ENCODE measurements at regions of chr20 and their contacts with region 1.

Region 1: GRCh38 chr20:50655311-50655880 is 35.9 kb downstream of the RIPOR3 start:
- DNase-seq: peak; percentile 68 to 85 (median 79)
- ATAC-seq: peak; percentile 68 to 84 (median 78)
- H3K4me3 ChIP-seq: peak overlapping the region in 7 of 12 donors; percentile 6 to 33 (median 14)
- H3K27ac ChIP-seq: peak overlapping the region; percentile 54 to 86 (median 76)
- H3K4me1 ChIP-seq: peaks cover 3 to 52% (median 31%) of the 10 kb centered on the region in 12 donors
- H3K27me3 ChIP-seq: no peaks in the 10 kb centered on the region
- CTCF ChIP-seq: no peak
- POLR2A ChIP-seq: peak in 1 of 2 donors; percentile 17

Region 2: DNA sequence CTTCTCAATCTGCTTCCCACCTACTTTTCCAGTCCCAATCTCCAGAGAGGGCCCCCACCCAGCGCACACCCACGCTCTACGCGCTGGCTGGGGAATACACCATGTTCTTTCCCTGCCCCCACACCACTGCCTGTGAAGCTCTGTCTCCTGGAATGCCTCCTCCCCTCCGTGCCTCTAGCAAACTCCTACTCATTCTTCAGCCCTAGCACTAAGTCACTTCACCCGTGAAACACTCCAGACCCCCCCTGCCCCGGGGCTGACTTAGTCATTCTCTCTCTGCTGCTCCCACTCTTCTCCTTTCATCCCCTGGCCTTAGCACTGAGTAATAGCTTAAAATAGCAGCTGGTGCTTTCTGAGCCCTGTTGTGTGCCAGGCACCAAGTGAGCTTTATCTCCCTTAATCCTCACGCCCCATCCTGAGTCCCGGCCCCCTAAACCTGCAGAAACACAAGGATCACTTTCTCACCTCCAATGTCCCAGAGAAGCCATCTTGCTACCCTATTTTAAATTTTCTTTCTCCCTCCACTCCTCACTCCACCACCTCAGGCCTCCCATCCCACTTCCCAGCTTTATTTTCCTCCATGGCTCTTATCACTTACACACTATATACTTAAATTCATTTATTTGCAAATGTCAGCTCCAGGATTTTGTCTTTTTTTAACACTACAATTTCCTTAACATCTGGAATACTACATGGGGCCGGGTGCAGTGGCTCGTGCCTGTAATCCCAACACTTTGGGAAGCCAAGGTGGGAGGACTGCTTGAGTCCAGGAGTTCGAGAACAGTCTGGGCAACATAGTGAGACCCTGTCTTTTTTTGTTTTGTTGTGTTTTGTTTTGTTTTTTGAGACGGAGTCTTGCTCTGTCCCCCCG is 69.7 kb after region 1 on chr20:
- intact Hi-C with region 1: loop called in 1 of 10 experiments (anchors 5 kb)
- DNase-seq: peak; percentile 62 to 93 (median 75)
- ATAC-seq: peak; percentile 71 to 92 (median 86)
- H3K4me3 ChIP-seq: no peak overlapping the region
- H3K27ac ChIP-seq: peak overlapping the region; percentile 64 to 89 (median 76)
- H3K4me1 ChIP-seq: peaks cover 0 to 36% (median 16%) of the 10 kb centered on the region in 12 donors
- H3K27me3 ChIP-seq: peaks cover 0 to under 1% (median 0%) of the 10 kb centered on the region in 9 donors
- CTCF ChIP-seq: no peak
- POLR2A ChIP-seq: peak in 1 of 2 donors; percentile 25

Region 3: GRCh38 chr20:51661609-51662178 is 1006.3 kb after region 1 on chr20:
- intact Hi-C with region 1: no loop called
- DNase-seq: no peak
- ATAC-seq: no peak
- H3K4me3 ChIP-seq: no peak overlapping the region
- H3K27ac ChIP-seq: no peak overlapping the region
- H3K4me1 ChIP-seq: peaks cover 0 to 9% (median 0%) of the 10 kb centered on the region in 12 donors
- H3K27me3 ChIP-seq: no peaks in the 10 kb centered on the region
- CTCF ChIP-seq: no peak
- POLR2A ChIP-seq: no peak

Measured in heart left ventricle (tissue), 16 donors.